ENCODE measurements at regions of chr16 and their contacts with region 1.

Region 1: DNA sequence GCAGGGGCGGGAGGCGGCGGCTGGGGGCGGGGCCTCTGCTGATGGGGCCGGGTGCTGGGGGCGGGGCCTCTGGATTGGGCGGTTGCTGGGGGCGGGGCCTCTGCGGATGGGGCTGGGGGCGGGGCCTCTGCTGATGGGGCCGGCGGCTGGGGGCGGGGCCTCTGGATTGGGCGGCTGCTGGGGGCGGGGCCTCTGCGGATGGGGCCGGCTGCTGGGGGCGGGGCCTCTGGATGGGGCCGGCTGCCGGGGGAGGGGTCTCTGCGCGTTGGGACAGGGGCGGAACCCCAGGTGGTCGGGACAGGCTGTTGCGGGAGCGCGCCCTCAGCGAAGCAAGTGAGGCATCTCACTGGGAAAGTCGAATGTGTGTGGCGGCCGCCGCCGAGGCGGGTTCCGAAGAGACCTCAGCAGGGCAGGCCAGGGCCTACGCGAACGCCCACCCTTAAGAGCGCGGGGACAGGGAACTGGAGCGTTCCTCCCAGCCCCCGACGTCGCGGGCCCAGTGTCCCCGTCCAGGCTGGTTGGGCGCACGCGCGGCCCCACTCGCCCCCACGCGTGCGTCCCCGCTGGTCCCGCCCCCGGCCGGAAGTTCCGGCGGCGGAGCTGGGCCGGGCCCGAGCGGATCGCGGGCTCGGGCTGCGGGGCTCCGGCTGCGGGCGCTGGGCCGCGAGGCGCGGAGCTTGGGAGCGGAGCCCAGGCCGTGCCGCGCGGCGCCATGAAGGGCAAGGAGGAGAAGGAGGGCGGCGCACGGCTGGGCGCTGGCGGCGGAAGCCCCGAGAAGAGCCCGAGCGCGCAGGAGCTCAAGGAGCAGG is at the start of gene STUB1:
- DNase-seq: peak; percentile 90
- H3K4me3 ChIP-seq: peak within 1 kb of the TSS; percentile 68 to 83 (median 71)
- H3K27ac ChIP-seq: peak within 1 kb of the TSS; percentile 31
- H3K4me1 ChIP-seq: peaks cover 20% of the 10 kb centered on the region
- H3K27me3 ChIP-seq: no peaks in the 10 kb centered on the region
- CTCF ChIP-seq: no peak
- POLR2A ChIP-seq: peak; percentile 92
- total RNA-seq, gene STUB1: 105 and 107 TPM in 2 replicates

Region 2: GRCh38 chr16:667780-668518 is 12.1 kb before region 1 on chr16 and contains the start of gene RHOT2:
- CTCF ChIA-PET with region 1: interaction called, 6 read pairs
- POLR2A ChIA-PET with region 1: no interaction called
- dilution Hi-C with region 1: no loop called
- intact Hi-C with region 1: loop called (anchors 1 kb)
- DNase-seq: peak; percentile 86
- H3K4me3 ChIP-seq: peak within 1 kb of the TSS; percentile 65 to 80 (median 79)
- H3K27ac ChIP-seq: peak within 1 kb of the TSS; percentile 48
- H3K4me1 ChIP-seq: no peaks in the 10 kb centered on the region
- H3K27me3 ChIP-seq: no peaks in the 10 kb centered on the region
- CTCF ChIP-seq: peak; percentile 70 to 96
- POLR2A ChIP-seq: peak; percentile 79
- total RNA-seq, gene RHOT2: 96.0 and 106 TPM in 2 replicates

Region 3: DNA sequence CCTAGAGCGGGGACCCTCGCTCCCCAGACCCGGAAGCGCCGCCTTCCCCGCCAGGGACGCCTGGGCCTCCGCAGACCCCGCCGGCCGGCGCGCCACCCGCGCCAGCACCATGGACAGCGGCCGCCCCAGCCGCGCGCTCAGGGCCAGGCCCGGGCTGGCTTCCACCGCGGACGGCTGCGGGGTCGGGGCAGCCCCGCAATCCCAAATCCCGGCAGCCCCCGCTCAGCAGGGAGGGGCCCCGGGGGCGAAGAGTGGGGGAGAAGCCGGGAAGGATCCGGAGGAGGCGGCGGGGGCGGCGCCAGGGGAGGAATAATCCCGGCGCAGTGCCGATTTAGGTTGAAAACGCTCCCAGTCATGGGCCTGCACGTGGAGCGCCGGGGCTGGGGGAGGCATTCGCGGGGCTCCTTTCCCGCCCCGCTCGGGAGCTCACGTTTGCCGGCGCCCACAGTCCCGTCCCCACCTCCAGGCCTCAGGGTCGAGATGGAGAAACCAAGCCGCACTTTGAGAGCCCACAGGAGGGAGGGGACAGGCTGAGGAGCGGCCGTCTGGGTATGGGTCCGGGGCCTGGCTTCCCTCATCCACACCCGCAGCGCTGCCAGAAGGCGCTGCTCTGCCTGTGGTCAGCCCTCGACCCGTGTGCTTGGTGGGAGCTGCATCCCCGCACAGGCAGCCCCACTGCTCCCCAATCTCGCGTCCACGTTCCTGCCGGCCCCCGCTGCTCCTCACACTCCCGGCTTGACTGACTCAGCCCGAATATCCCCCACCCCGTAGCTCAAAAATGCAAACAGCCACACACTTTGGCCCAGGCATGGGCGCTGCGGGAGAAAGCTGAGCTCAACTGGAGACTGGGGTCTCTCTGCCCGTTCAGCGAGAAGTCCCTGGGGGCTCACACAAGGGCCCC is 20.9 kb after region 1 on chr16:
- CTCF ChIA-PET with region 1: no interaction called
- POLR2A ChIA-PET with region 1: no interaction called
- dilution Hi-C with region 1: no loop called
- intact Hi-C with region 1: no loop called
- DNase-seq: no peak
- H3K4me3 ChIP-seq: no peak overlapping the region
- H3K27ac ChIP-seq: no peak overlapping the region
- H3K4me1 ChIP-seq: no peaks in the 10 kb centered on the region
- H3K27me3 ChIP-seq: peaks cover 29 to 31% of the 10 kb centered on the region in 2 experiments
- CTCF ChIP-seq: no peak
- POLR2A ChIP-seq: no peak